Activated naive CD4-positive, alpha-beta T cell treated with anti-CD3 and anti-CD28 coated beads for 36 hours (primary cell): ENCODE measurements at regions of chr1 and their contacts with region 1.

Region 1: GRCh38 chr1:93021539-93022134 is 57.4 kb upstream of the MTF2 start:
- DNase-seq: no peak
- H3K4me3 Mint-ChIP-seq: no peak overlapping the region
- H3K27ac Mint-ChIP-seq: no peak overlapping the region
- H3K4me1 Mint-ChIP-seq: no peaks in the 10 kb centered on the region
- H3K27me3 Mint-ChIP-seq: peaks cover 1% of the 10 kb centered on the region

Region 2: DNA sequence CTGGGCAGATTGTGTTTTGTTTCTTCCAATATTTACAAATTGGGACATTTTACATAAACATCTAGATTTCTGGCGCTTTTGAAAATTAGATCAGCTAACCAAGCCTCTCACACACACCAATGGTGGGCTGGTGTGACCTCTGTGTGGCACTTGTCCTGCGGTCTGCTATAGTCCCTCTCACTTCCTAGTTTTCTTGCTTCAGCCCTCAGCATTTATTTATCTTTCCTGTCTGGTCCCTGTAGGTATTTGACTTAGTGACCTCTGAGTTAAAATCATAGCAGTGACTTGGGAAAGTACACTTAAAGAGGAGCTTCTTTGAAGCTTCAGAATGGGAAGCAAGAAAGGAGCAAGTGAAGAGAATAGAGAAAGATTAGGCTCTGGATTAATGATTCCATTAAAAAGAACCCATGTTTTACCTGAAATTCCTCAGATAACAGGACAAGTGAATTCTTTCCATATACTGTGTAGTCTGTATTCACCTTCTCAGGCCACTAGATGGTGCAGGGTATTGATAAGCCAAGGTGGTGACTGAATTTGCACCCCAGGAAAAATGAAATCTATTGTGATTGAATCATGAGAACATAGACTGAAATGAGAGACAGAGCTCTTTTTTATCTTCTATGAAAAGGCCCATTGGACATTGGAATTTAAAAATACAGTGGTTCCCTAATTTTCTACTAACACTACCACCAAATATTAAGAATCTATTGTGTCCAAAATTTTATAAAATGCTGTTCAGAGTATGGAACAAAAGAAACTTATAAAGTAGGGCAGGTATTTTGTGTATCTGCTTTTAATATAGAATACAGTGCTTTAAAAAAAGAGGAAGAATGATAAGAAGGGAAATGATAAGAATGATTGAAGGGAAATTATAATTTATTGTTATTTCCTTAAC is 53.3 kb before region 1 on chr1:
- CTCF ChIA-PET with region 1: interaction called, 3 read pairs
- intact Hi-C with region 1: loop called (anchors 1 kb)
- DNase-seq: peak; percentile 49
- H3K4me3 Mint-ChIP-seq: no peak overlapping the region
- H3K27ac Mint-ChIP-seq: no peak overlapping the region
- H3K4me1 Mint-ChIP-seq: peaks cover 30% of the 10 kb centered on the region
- H3K27me3 Mint-ChIP-seq: no peaks in the 10 kb centered on the region

Region 3: GRCh38 chr1:93304716-93305138 is 283.1 kb after region 1 on chr1:
- CTCF ChIA-PET with region 1: interaction called, 3 read pairs
- intact Hi-C with region 1: loop called (anchors 2 kb)
- DNase-seq: peak; percentile 67
- H3K4me3 Mint-ChIP-seq: no peak overlapping the region
- H3K27ac Mint-ChIP-seq: no peak overlapping the region
- H3K4me1 Mint-ChIP-seq: no peaks in the 10 kb centered on the region
- H3K27me3 Mint-ChIP-seq: no peaks in the 10 kb centered on the region

Region 4: GRCh38 chr1:93374334-93375106 is 352.9 kb after region 1 on chr1:
- CTCF ChIA-PET with region 1: interaction called, 12 read pairs
- intact Hi-C with region 1: no loop called
- DNase-seq: no peak
- H3K4me3 Mint-ChIP-seq: no peak overlapping the region
- H3K27ac Mint-ChIP-seq: no peak overlapping the region
- H3K4me1 Mint-ChIP-seq: no peaks in the 10 kb centered on the region
- H3K27me3 Mint-ChIP-seq: no peaks in the 10 kb centered on the region

Region 5: DNA sequence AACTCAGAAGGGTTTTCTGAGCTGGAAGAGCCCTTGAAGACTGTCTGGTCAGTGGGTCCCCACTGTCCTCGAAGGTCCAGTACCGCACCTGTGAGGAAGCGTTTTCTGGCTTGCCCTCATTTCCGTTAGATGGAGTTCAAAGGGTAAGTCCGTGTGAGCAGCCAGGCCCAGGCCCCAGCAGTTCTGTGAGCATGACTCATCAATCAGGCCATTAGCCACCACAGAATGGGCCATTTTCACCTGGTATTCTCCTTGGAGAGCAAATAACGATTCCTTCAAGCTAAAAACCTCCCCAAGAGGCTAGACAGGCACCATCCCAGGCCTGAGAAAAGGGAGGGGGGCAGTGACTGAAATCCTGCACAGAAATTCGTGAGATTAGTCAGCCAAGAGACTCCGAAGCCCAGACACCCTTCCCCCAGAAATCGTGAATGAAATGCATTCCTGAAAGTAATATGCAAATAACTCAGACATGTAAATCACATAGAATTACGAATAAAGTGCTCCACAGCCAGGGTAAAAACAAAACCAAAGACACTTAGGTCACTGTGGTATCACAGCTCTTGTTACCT is 594.0 kb after region 1 on chr1:
- CTCF ChIA-PET with region 1: no interaction called
- intact Hi-C with region 1: loop called (anchors 5 kb)
- DNase-seq: peak; percentile 76
- H3K4me3 Mint-ChIP-seq: no peak overlapping the region
- H3K27ac Mint-ChIP-seq: no peak overlapping the region
- H3K4me1 Mint-ChIP-seq: peaks cover 17% of the 10 kb centered on the region
- H3K27me3 Mint-ChIP-seq: peaks cover 3% of the 10 kb centered on the region